PC-9 (cell line): ENCODE measurements at regions of chr17 and their contacts with region 1.

Region 1: GRCh38 chr17:44438636-44439035 is 49.2 kb upstream of the ITGA2B start:
- DNase-seq: no peak
- H3K4me3 ChIP-seq: no peak overlapping the region
- H3K27ac ChIP-seq: no peak overlapping the region
- H3K4me1 ChIP-seq: no peaks in the 10 kb centered on the region
- H3K27me3 ChIP-seq: no peaks in the 10 kb centered on the region
- CTCF ChIP-seq: no peak

Region 2: GRCh38 chr17:44503147-44504029 is 64.8 kb after region 1 on chr17 and contains the start of gene GPATCH8:
- CTCF ChIA-PET with region 1: no interaction called
- POLR2A ChIA-PET with region 1: interaction called, 13 read pairs
- intact Hi-C with region 1: no loop called
- DNase-seq: peak; percentile 84 to 97
- H3K4me3 ChIP-seq: peak within 1 kb of the TSS; percentile 94
- H3K27ac ChIP-seq: peak within 1 kb of the TSS; percentile 79
- H3K4me1 ChIP-seq: peaks cover 32% of the 10 kb centered on the region
- H3K27me3 ChIP-seq: no peaks in the 10 kb centered on the region
- CTCF ChIP-seq: no peak
- total RNA-seq, gene GPATCH8: 31.0 and 39.4 TPM in 2 replicates